H1 (cell line): ENCODE measurements at regions of chr18 and their contacts with region 1.

Region 1: GRCh38 chr18:8450013-8450412 is 159.2 kb upstream of the RAB12 start:
- DNase-seq: peak; percentile 25 to 75
- H3K4me3 ChIP-seq: no peak overlapping the region
- H3K27ac ChIP-seq: no peak overlapping the region
- H3K4me1 ChIP-seq: no peaks in the 10 kb centered on the region
- H3K27me3 ChIP-seq: no peaks in the 10 kb centered on the region
- CTCF ChIP-seq: peak; percentile 66 to 87 (median 70)
- EP300 ChIP-seq: no peak
- POLR2A ChIP-seq: no peak
- RAD21 ChIP-seq: peak; percentile 53 to 68

Region 2: GRCh38 chr18:8439055-8439454 is 11.0 kb before region 1 on chr18:
- CTCF ChIA-PET with region 1: interaction called, 23 read pairs
- POLR2A ChIA-PET with region 1: no interaction called
- DNase-seq: no peak
- H3K4me3 ChIP-seq: no peak overlapping the region
- H3K27ac ChIP-seq: no peak overlapping the region
- H3K4me1 ChIP-seq: no peaks in the 10 kb centered on the region
- H3K27me3 ChIP-seq: no peaks in the 10 kb centered on the region
- CTCF ChIP-seq: no peak
- EP300 ChIP-seq: no peak
- POLR2A ChIP-seq: no peak
- RAD21 ChIP-seq: no peak

Region 3: GRCh38 chr18:8468921-8469335 is 18.9 kb after region 1 on chr18:
- CTCF ChIA-PET with region 1: interaction called, 15 read pairs
- POLR2A ChIA-PET with region 1: no interaction called
- DNase-seq: peak in 1 of 2 experiments; percentile 32
- H3K4me3 ChIP-seq: no peak overlapping the region
- H3K27ac ChIP-seq: no peak overlapping the region
- H3K4me1 ChIP-seq: no peaks in the 10 kb centered on the region; a peak in 1 of 7 replicates
- H3K27me3 ChIP-seq: no peaks in the 10 kb centered on the region
- CTCF ChIP-seq: no peak
- EP300 ChIP-seq: no peak
- POLR2A ChIP-seq: no peak
- RAD21 ChIP-seq: no peak

Region 4: DNA sequence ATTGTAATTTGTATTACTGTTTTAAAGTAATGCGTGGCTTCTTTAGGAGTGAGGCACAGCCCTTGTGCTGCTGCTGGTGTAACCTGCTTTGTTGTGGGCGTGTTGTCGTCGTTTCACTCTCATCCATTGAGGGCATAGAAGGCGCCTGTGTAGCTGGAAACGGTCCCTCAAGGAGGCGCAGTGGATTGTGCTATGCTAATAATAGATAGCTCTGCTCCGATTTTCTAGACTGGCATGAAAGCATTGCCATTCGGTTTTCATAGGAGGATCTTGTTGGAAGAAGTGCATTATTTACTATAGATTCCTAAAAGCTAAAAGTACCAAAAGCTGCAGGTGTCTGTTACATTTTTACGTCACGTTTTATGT is 177.1 kb after region 1 on chr18:
- CTCF ChIA-PET with region 1: no interaction called
- POLR2A ChIA-PET with region 1: no interaction called
- DNase-seq: no peak
- H3K4me3 ChIP-seq: no peak overlapping the region
- H3K27ac ChIP-seq: no peak overlapping the region
- H3K4me1 ChIP-seq: peaks cover 15 to 47% (median 33%) of the 10 kb centered on the region in 4 experiments
- H3K27me3 ChIP-seq: no peaks in the 10 kb centered on the region
- CTCF ChIP-seq: no peak
- EP300 ChIP-seq: no peak
- POLR2A ChIP-seq: no peak
- RAD21 ChIP-seq: no peak